ENCODE measurements at regions of chr16 and their contacts with region 1.

Region 1: DNA sequence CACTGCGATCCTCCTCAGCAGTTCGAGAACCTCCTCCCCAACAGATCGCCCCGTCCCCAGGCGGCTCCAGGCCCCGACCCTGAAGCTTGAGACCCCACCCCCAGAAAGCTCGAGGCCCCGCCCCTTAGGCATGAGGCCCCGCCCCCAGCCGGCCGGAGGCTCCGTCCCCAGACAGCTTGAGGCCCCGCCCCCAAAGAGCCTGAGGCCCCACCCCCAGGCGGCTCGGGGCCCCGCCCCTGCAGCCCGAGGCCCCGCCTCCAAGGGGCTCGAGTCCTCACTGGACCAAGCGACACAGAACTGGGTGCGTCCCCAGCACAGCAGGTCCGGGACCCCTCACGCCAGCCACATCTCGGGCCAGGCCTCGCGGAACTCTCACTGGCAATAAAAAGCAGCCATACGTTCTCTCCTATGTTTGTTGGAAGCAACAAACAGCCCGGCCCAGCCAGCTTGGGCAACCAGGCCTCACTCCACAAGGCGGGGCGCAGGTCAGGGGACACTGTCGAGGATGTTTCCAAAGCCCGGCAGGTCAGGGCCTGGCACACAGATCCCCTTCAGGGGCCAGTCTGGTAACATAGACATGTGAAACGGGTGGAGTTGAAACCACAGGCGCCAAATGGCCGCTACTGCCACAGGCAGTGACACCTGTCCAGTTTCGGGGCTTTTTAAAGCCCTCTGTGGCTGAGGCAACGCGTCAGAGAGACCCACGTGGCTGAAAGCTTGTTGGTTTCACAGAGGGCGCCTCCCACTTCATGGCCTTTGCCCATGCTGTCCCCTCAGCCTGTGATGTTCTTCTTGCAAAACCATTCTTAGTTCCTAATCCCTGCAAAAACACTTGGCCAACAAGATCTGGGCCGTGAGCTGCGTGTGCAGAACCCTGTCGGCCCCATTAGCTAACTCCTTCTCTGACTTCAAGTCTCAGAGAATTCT is 224.2 kb downstream of the PARN start:
- DNase-seq: peak in 1 of 2 donors; percentile 87
- H3K4me3 ChIP-seq: no peak overlapping the region
- CTCF ChIP-seq: no peak
- POLR2A ChIP-seq: no peak

Region 2: DNA sequence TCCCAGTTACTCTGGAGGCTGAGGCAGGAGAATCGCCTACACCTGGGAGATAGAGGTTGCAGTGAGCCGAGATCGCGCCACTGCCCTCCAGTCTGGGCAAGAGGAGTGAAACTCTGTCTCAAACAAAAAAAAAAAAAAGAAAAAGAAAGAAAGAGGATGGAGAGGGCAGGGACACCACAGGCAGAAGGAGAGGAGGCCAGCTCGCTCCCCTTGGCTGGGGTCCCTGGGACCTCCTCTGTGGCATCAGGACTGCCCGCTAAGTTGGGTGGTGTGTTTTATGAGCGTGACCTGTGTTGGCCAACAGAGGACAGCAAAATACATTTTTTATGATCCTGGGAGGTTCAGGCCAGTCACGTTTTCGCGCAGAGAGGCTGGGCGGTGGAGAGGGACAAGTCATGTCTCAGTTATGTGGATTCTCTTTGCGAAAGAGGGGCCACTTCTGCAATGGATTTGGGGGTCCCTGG is 105.1 kb before region 1 on chr16:
- intact Hi-C with region 1: loop called (anchors 10 kb)
- DNase-seq: peak; percentile 81 to 95
- H3K4me3 ChIP-seq: no peak overlapping the region
- CTCF ChIP-seq: peak in 1 of 3 donors; percentile 6
- POLR2A ChIP-seq: no peak

Region 3: DNA sequence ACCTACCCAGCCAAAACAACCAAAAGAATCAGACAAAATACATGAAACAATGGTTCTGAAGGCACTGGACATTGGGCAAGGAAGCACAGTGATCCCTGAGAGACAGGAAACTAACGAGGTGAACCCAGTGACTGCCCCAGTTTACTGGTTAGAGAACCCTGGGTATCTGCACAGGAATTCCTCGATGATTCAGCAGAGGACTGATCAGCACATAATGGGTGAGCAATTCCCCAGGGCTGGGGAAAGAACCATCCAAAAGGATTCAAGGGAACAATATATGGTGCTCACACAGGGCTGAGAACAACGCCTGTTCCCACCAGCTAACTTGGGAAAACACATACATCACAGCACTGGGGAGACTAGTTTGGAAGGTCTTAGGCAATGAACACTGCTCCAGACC is 56.9 kb after region 1 on chr16:
- intact Hi-C with region 1: no loop called
- DNase-seq: no peak
- H3K4me3 ChIP-seq: no peak overlapping the region
- CTCF ChIP-seq: no peak
- POLR2A ChIP-seq: no peak